PC-3 (cell line): ENCODE measurements at regions of chr7 and their contacts with region 1.

Region 1: GRCh38 chr7:46637793-46638735 is 717.0 kb upstream of the IGFBP3 start:
- DNase-seq: no peak
- ATAC-seq: no peak
- H3K4me3 ChIP-seq: no peak overlapping the region
- H3K27ac ChIP-seq: no peak overlapping the region
- H3K4me1 ChIP-seq: no peaks in the 10 kb centered on the region
- H3K27me3 ChIP-seq: no peaks in the 10 kb centered on the region
- CTCF ChIP-seq: no peak

Region 2: DNA sequence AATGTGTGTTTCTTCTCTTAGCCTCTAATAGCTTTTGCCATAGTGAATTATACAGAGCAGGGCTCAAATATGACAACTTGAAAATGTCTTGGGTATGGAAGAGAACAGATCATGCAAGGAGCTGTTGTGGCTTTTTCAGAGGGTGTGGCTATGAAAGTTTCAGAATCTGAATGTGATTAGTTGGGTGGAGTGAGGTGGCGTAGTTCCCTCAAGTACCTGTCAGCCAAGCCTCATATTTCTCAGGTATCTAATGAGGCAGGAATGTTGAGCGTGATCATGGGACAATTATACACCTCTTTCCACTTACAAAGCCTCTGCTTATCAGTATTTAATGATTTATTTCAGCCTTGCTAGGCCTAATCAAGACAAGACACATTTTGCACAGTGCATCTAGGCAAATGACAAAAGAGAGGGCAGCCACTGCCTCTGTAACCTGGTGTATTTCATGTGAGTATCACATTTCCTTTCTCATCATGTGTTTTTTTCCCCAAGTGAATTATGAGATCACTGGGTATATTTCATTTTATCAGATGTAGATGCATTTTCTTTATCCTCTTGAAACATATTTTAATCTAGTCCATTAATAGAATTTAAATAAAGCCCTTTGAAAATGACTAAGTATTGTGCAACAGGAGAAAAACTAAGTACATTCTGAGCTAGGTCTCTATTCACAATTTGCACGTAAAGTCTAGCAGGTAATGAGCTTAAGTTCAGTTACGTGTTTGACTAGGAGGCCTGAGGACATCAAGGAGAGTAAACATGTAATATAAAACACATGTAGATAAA is 72.6 kb before region 1 on chr7:
- CTCF ChIA-PET with region 1: interaction called, 11 read pairs
- POLR2A ChIA-PET with region 1: no interaction called
- intact Hi-C with region 1: no loop called
- DNase-seq: no peak
- ATAC-seq: no peak
- H3K4me3 ChIP-seq: no peak overlapping the region
- H3K27ac ChIP-seq: no peak overlapping the region
- H3K4me1 ChIP-seq: peaks cover 28% of the 10 kb centered on the region
- H3K27me3 ChIP-seq: no peaks in the 10 kb centered on the region
- CTCF ChIP-seq: no peak

Region 3: DNA sequence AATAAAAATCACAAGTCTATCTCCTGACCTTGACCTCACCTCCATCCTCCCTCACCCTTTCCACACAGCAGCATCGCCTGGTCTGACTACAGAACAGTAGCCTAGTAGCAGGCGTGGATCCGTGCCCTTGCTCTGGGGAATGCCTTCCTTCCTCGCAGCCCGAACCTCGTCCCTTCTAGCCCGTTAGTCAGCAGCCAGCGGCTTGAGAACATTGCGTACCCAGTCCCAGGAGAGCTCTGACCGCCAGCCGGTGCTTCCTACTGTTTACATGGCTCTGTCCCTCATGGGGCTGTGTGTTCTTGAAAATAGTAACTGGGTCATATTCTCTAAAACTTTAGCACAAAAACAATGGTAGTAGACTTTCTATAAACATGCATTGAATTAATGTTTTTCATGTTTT is 34.3 kb before region 1 on chr7:
- CTCF ChIA-PET with region 1: no interaction called
- POLR2A ChIA-PET with region 1: no interaction called
- intact Hi-C with region 1: no loop called
- DNase-seq: no peak
- ATAC-seq: no peak
- H3K4me3 ChIP-seq: no peak overlapping the region
- H3K27ac ChIP-seq: no peak overlapping the region
- H3K4me1 ChIP-seq: no peaks in the 10 kb centered on the region
- H3K27me3 ChIP-seq: no peaks in the 10 kb centered on the region
- CTCF ChIP-seq: no peak